A673 (cell line): ENCODE measurements at regions of chr10 and their contacts with region 1.

Region 1: DNA sequence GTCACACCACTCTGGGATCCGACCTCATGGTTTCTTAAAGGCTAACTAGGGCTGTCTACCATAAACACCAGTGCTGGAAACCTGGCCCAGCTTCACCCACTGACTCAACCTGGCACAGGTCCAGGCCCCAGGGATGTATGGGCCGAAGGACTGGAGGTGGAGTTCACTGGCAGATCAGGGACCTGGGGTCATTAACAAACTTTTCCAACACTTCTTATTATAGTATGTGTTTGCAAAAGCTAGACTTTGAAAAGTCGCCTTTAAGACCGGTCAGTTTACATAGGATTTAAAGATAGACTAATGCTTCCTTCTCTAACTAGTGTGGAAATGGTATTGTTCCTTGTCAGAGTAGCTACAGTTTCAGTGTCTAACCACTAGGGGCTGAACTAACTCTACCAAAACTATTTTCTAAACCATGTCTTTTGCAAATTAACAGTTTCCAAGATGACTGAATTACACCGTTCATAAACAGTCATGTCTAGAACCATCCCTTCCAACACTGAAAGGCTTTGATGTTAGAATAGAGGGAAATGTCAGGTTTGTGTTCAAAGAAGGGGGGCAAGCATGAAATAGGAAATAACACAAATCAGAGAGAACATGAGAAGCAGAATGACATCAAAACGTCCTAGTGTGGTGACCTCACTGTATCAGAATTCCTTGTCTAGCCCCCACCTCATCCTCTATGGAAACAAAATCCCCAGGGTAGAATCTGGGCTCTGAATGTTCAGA is 29.7 kb downstream of the STN1 start:
- DNase-seq: peak; percentile 73
- H3K4me3 ChIP-seq: no peak overlapping the region
- H3K27ac ChIP-seq: no peak overlapping the region
- H3K4me1 ChIP-seq: no peaks in the 10 kb centered on the region
- H3K27me3 ChIP-seq: no peaks in the 10 kb centered on the region
- CTCF ChIP-seq: peak; percentile 87

Region 2: DNA sequence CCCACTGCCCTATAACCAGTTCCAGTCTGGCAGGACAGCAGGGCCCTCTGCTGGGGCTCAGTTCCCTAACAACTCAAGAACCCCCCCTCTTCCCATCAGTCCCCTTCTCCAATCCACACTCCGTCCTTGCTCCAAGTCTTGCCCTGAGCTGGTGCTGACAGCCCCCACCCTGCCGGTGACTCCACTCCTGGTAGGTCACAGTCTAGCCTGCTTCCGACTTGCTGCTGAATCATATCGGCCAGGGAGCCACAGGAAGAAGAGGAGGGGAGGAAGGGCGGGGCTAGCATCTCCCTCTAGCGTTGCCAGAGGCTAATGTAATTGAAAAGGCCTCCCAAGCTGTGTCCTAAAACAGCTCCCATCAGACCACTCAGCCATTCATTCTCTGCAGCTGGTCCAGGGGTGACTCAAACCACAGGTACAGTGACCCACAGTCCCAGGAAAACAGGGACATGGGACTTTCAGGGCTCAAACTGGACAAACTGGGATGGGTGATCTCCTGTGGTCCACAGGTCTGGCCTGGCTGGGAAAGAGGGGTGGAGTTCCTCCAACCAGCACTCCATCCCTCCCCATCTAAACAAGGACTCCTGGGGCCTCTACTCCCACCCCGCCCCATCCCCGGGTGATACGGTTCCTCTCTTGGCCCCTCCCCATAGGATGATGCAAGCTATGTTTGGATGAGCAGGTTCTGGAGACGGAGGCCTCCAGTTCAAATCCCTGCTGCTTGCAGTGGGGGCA is 191.7 kb before region 1 on chr10:
- CTCF ChIA-PET with region 1: no interaction called
- POLR2A ChIA-PET with region 1: no interaction called
- intact Hi-C with region 1: no loop called
- DNase-seq: peak; percentile 82
- H3K4me3 ChIP-seq: no peak overlapping the region
- H3K27ac ChIP-seq: peak overlapping the region; percentile 56
- H3K4me1 ChIP-seq: peaks cover 31% of the 10 kb centered on the region
- H3K27me3 ChIP-seq: no peaks in the 10 kb centered on the region
- CTCF ChIP-seq: peak; percentile 48

Region 3: GRCh38 chr10:103712570-103713498 is 175.4 kb before region 1 on chr10:
- CTCF ChIA-PET with region 1: interaction called, 6 read pairs
- POLR2A ChIA-PET with region 1: no interaction called
- intact Hi-C with region 1: loop called (anchors 1 kb)
- DNase-seq: peak; percentile 84
- H3K4me3 ChIP-seq: no peak overlapping the region
- H3K27ac ChIP-seq: no peak overlapping the region
- H3K4me1 ChIP-seq: peaks cover 11% of the 10 kb centered on the region
- H3K27me3 ChIP-seq: no peaks in the 10 kb centered on the region
- CTCF ChIP-seq: peak; percentile 88

Region 4: DNA sequence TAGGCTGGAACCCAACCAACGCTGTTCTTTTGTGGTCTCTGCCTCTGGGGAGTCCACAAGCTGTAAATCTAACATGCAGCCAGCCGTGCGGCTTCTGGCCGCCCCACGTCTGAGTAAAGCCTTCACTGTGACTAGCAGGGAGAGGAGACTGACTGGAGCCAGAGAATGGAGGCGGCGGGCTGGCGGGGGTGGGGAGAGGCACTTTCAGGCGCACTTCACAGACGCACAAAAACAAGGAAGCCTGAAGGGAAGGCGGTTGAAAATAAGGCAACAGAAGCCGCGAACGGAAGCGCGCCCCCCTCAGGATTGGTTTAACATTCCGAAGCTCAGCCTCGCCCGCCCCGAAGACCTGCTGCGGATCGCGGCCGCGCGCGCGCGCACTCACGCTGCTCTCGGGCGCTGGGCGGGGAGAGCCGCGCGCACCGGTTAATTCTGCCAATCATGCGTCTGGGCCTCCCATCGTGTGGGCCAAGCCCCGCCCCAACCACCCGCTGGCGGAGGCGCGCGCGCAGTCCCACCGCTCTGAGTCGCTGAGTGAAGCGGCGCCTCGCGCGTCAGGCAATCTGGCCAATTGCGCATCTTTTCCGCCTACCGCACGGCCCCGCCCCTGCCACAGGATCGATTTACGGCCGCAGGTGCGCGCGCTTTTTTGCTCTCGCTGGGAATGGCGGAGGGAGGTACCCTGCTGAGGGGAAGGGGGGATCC is 233.4 kb after region 1 on chr10 and contains the start of gene SFR1:
- CTCF ChIA-PET with region 1: interaction called, 18 read pairs
- POLR2A ChIA-PET with region 1: no interaction called
- intact Hi-C with region 1: loop called (anchors 1 kb)
- DNase-seq: peak; percentile 99
- H3K4me3 ChIP-seq: peak within 1 kb of the TSS; percentile 67
- H3K27ac ChIP-seq: peak within 1 kb of the TSS; percentile 91
- H3K4me1 ChIP-seq: peaks cover 23% of the 10 kb centered on the region
- H3K27me3 ChIP-seq: no peaks in the 10 kb centered on the region
- CTCF ChIP-seq: peak; percentile 84
- total RNA-seq, gene SFR1: 11.2 and 12.6 TPM in 2 replicates

Region 5: DNA sequence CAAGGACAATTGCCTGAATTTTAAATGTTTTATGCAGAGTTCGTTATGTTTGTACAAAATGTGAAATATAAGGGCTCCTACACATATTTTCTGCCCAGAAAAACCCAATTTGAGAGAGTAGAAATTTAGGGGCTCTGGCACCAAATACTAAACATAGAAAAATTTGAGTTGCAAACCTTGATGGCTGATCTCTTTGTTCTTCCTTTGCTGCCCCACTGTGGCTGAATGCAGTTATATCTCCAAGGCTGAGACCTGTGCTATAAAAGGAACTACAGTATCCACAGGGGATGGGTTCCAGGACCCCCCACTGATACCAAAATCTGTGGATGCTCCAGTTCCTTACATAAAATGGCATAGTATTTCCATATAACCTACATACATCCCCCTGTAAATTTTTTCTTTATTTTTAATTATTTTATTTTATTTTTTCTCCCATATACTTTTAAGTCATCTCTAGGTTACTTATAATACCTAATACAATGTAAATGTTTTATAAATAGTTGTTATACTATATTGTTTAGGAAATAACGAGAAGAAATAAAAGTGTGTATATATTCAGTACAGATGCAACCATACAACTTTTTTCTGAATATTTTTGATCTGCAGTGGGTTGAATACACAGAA is 321.4 kb after region 1 on chr10:
- CTCF ChIA-PET with region 1: no interaction called
- POLR2A ChIA-PET with region 1: no interaction called
- intact Hi-C with region 1: loop called (anchors 1 kb)
- DNase-seq: peak; percentile 74
- H3K4me3 ChIP-seq: no peak overlapping the region
- H3K27ac ChIP-seq: no peak overlapping the region
- H3K4me1 ChIP-seq: no peaks in the 10 kb centered on the region
- H3K27me3 ChIP-seq: no peaks in the 10 kb centered on the region
- CTCF ChIP-seq: peak; percentile 66